Left cardiac atrium (tissue), 4 donors: ENCODE measurements at regions of chr10 and their contacts with region 1.

Region 1: DNA sequence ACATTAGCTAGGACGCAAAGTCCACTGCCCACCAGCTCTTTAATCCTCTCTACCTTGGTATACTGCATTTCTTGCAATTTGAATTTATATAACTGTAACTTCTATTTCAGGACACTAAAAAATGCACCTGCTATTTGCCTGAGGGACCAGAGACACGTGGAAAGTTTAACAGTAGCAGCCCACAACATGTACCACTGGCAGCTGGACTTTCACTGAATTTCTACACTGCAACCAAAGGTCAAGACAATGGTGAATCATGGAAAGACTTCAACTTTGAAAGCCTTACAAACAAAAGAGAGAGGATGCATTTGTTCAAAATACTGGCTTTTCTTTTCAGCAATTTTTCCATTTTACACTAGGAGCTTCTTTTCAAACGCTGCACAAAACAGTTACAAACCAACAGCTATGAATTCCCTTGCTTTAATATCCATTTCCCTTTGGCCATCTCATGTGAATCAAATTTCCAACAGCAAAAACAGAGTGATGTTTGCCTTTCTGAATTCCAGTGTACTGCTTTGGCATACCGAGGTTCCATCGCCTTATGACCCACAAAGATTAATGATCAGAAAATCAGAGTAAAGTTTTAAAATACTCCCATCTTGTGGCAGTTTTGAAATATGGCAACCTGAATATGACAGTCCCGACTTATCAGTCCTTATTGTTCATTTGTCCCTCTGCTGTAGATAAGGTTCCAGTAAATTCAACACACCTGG is 29.9 kb upstream of the HNRNPH3 start:
- DNase-seq: no peak
- ATAC-seq: peak; percentile 60 to 68

Region 2: GRCh38 chr10:68212721-68213352 is 89.1 kb before region 1 on chr10:
- intact Hi-C with region 1: loop called (anchors 5 to 10 kb)
- DNase-seq: no peak
- ATAC-seq: no peak

Region 3: DNA sequence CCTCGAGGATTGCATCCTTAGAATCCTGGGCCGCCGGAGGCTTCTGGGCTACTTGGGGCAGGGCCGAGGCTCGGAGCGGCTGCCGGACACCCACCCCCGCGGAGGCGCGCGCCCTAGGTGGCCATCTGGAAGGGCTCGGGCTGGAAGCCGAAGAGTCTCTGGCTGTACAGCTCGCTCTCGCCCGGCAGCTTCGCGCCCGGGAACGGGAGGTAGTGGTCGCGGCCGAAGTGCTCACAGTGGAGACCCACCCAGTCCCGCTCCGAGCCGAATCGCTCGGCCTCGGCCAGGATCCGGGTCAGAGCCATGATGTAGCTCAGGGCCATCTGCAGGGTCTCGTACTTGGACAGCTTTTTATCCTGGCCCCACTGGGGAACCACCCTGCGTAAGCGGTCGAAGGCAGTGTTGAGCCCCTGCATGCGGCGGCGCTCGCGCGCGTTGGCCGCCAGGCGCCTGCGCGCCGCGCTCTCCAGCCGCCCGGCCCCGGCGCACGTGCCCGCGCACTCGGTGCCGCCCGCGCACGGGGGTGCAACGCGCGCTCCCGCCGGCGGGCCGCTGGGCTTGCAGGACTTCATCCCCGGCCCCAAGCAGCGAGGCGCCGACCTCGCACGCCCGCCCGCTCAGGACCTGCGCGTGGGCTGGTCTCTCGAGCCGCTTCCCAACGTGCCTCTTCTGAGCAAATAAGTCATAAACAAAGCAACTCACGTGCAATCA is 70.7 kb before region 1 on chr10:
- intact Hi-C with region 1: loop called in 1 of 2 experiments (anchors 5 kb)
- DNase-seq: peak; percentile 60
- ATAC-seq: peak; percentile 98 to 99